CD4-positive, alpha-beta T cell (primary cell): ENCODE measurements at regions of chr13 and their contacts with region 1.

Region 1: GRCh38 chr13:48769107-48769704 is 115.5 kb downstream of the CYSLTR2 start:
- DNase-seq: peak; percentile 46 to 91 (median 78)
- ATAC-seq: peak; percentile 100
- H3K4me3 ChIP-seq: no peak overlapping the region
- H3K4me3 Mint-ChIP-seq: no peak overlapping the region
- H3K27ac ChIP-seq: no peak overlapping the region
- H3K27ac Mint-ChIP-seq: no peak overlapping the region
- H3K4me1 ChIP-seq: no peaks in the 10 kb centered on the region
- H3K4me1 Mint-ChIP-seq: no peaks in the 10 kb centered on the region
- H3K27me3 ChIP-seq: no peaks in the 10 kb centered on the region
- H3K27me3 Mint-ChIP-seq: peaks cover 6% of the 10 kb centered on the region
- CTCF ChIP-seq: peak; percentile 100

Region 2: GRCh38 chr13:48094781-48095502 is 674.3 kb before region 1 on chr13 and contains the start of gene MED4:
- CTCF ChIA-PET with region 1: interaction called, 3 read pairs
- POLR2A ChIA-PET with region 1: no interaction called
- intact Hi-C with region 1: loop called in 1 of 2 experiments (anchors 10 kb)
- DNase-seq: peak; percentile 95 to 99 (median 97)
- ATAC-seq: peak; percentile 98
- H3K4me3 ChIP-seq: peak within 1 kb of the TSS; percentile 85
- H3K4me3 Mint-ChIP-seq: peak within 1 kb of the TSS; percentile 100
- H3K27ac ChIP-seq: peak within 1 kb of the TSS; percentile 84 to 89
- H3K27ac Mint-ChIP-seq: peak within 1 kb of the TSS; percentile 95
- H3K4me1 ChIP-seq: peaks cover 23% of the 10 kb centered on the region
- H3K4me1 Mint-ChIP-seq: peaks cover 53% of the 10 kb centered on the region
- H3K27me3 ChIP-seq: no peaks in the 10 kb centered on the region
- H3K27me3 Mint-ChIP-seq: no peaks in the 10 kb centered on the region
- CTCF ChIP-seq: peak; percentile 99
- total RNA-seq, gene MED4: 48.9 to 56.1 TPM

Region 3: GRCh38 chr13:48580185-48580803 is 188.9 kb before region 1 on chr13:
- CTCF ChIA-PET with region 1: interaction called, 16 read pairs
- POLR2A ChIA-PET with region 1: no interaction called
- intact Hi-C with region 1: no loop called
- DNase-seq: peak; percentile 54 to 87 (median 72)
- ATAC-seq: peak; percentile 73
- H3K4me3 ChIP-seq: no peak overlapping the region
- H3K4me3 Mint-ChIP-seq: no peak overlapping the region
- H3K27ac ChIP-seq: no peak overlapping the region
- H3K27ac Mint-ChIP-seq: no peak overlapping the region
- H3K4me1 ChIP-seq: peaks cover 7% of the 10 kb centered on the region
- H3K4me1 Mint-ChIP-seq: peaks cover 9% of the 10 kb centered on the region
- H3K27me3 ChIP-seq: peaks cover 0 to 8% of the 10 kb centered on the region in 2 experiments
- H3K27me3 Mint-ChIP-seq: peaks cover 6% of the 10 kb centered on the region
- CTCF ChIP-seq: peak; percentile 91

Region 4: DNA sequence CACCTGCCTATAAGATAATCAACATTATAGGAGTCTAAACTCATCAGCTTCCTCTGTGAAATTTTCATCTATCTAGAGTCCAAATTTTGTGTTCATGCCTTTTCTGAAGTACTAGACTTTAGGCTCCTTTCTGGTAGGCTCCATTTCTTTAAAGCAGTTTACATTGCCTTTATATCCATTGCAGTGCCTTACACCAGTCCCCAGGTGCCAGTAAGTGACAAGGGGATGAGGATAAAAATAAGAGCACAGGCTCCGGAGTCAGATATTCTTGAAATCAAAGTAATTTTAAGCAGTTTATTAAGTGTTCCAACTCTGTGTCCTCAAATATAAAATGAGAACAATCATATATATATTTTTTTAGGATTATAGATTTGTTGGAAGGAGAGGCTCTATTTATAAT is 126.0 kb before region 1 on chr13:
- CTCF ChIA-PET with region 1: interaction called, 4 read pairs
- POLR2A ChIA-PET with region 1: no interaction called
- intact Hi-C with region 1: loop called in 1 of 2 experiments (anchors 2 kb)
- DNase-seq: peak in 1 of 14 experiments; percentile 33
- ATAC-seq: no peak
- H3K4me3 ChIP-seq: no peak overlapping the region
- H3K4me3 Mint-ChIP-seq: no peak overlapping the region
- H3K27ac ChIP-seq: no peak overlapping the region
- H3K27ac Mint-ChIP-seq: no peak overlapping the region
- H3K4me1 ChIP-seq: no peaks in the 10 kb centered on the region
- H3K4me1 Mint-ChIP-seq: peaks cover 4% of the 10 kb centered on the region
- H3K27me3 ChIP-seq: no peaks in the 10 kb centered on the region
- H3K27me3 Mint-ChIP-seq: peaks cover 5% of the 10 kb centered on the region
- CTCF ChIP-seq: no peak

Region 5: GRCh38 chr13:48678316-48678715 is 90.9 kb before region 1 on chr13:
- CTCF ChIA-PET with region 1: no interaction called
- POLR2A ChIA-PET with region 1: no interaction called
- intact Hi-C with region 1: no loop called
- DNase-seq: no peak
- ATAC-seq: no peak
- H3K4me3 ChIP-seq: no peak overlapping the region
- H3K4me3 Mint-ChIP-seq: no peak overlapping the region
- H3K27ac ChIP-seq: no peak overlapping the region
- H3K27ac Mint-ChIP-seq: no peak overlapping the region
- H3K4me1 ChIP-seq: peaks cover 6% of the 10 kb centered on the region
- H3K4me1 Mint-ChIP-seq: peaks cover 15% of the 10 kb centered on the region
- H3K27me3 ChIP-seq: no peaks in the 10 kb centered on the region
- H3K27me3 Mint-ChIP-seq: no peaks in the 10 kb centered on the region
- CTCF ChIP-seq: no peak

Region 6: DNA sequence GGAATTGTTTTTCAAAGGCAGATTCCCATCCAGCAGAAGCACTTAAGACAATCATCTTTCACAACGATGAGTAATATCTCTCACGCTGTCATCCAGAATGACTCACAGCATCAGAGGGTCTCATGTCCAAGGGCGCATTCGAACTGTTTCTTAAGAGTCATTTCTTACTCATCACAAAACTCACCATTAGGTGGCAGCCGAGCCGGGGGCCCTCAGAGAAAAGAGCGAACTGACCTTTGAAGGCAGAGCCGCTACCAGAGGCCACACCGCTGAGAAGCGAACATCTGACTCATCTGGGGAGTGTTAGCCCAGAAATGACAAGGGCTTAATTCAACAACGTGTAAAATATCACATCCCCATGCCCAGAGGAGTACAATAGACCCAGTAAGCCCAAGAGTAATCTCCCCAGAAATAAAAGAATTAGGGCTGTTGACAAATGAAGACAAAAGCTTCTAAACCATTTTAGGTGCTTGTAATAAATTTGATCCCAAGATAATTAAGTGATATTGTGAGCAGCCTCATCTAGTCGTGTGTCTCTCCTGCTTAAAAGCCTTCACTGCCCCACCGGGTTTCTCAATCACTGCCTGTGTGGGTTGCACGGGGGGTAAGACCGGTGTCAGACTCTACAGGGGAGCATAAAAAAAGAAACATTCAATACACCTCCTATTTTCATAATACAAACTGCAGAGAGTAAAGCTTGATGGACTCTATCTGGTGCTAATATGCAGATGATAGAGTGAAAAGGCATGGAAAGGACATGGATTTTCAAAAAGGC is 19.3 kb before region 1 on chr13:
- CTCF ChIA-PET with region 1: interaction called, 11 read pairs
- POLR2A ChIA-PET with region 1: interaction called, 3 read pairs
- intact Hi-C with region 1: no loop called
- DNase-seq: peak in 12 of 14 experiments; percentile 10 to 70 (median 38)
- ATAC-seq: peak; percentile 46
- H3K4me3 ChIP-seq: peak overlapping the region; percentile 3
- H3K4me3 Mint-ChIP-seq: no peak overlapping the region
- H3K27ac ChIP-seq: no peak overlapping the region
- H3K27ac Mint-ChIP-seq: no peak overlapping the region
- H3K4me1 ChIP-seq: peaks cover 7% of the 10 kb centered on the region
- H3K4me1 Mint-ChIP-seq: peaks cover 8% of the 10 kb centered on the region
- H3K27me3 ChIP-seq: no peaks in the 10 kb centered on the region
- H3K27me3 Mint-ChIP-seq: no peaks in the 10 kb centered on the region
- CTCF ChIP-seq: no peak